ENCODE measurements at regions of chr4 and their contacts with region 1.

Region 1: GRCh38 chr4:7444747-7445146 is 10.0 kb upstream of the PSAPL1 start:
- DNase-seq: no peak
- H3K4me3 ChIP-seq: no peak overlapping the region
- H3K27ac ChIP-seq: no peak overlapping the region
- H3K4me1 ChIP-seq: no peaks in the 10 kb centered on the region
- H3K27me3 ChIP-seq: no peaks in the 10 kb centered on the region
- CTCF ChIP-seq: no peak
- POLR2A ChIP-seq: no peak

Region 2: GRCh38 chr4:7371210-7371941 is 73.4 kb before region 1 on chr4:
- intact Hi-C with region 1: no loop called
- DNase-seq: no peak
- H3K4me3 ChIP-seq: no peak overlapping the region
- H3K27ac ChIP-seq: no peak overlapping the region
- H3K4me1 ChIP-seq: peaks cover 12% of the 10 kb centered on the region
- H3K27me3 ChIP-seq: no peaks in the 10 kb centered on the region
- CTCF ChIP-seq: no peak
- POLR2A ChIP-seq: no peak

Region 3: DNA sequence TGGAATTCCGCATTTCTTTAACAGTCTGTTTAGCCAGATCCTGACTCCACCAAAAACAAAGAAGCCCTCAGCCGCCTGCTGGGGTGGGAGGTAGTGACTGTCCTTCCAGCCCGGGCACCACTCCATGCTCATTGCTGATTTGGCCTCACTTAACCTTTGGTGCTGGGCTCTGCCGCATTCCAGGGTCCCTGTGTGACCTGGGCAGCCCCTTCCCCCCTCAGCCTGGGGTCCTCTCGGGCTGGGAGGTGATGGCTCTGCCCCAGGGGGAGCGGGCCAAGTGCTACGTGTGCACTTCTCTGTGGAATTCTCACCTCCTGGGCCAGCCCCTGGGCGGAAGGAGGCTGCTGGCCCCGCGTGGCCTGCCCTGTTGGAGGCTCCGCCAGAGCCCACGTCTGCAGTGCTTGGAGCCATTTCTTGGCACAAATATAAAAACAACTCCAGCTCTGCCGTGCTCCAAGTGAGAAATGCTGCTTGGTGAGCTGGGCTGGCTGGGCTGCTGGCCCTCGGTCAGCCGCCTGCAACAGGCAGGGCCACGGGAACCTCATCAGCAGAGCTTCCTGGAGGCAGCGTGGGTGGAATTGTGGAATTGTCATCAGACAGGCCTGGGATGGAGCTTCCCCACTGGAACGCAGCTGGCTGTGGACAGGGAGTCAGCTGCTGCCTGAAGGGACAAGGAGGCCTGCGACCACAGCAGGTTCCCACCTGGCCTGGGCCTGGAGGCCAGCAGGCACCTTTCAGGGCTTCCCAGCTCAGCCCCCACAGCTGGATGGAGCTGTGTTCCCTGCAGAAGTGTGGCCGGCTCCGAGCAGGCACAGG is 1061.8 kb after region 1 on chr4:
- intact Hi-C with region 1: no loop called
- DNase-seq: no peak
- H3K4me3 ChIP-seq: no peak overlapping the region
- H3K27ac ChIP-seq: peak overlapping the region; percentile 87
- H3K4me1 ChIP-seq: peaks cover 45% of the 10 kb centered on the region
- H3K27me3 ChIP-seq: no peaks in the 10 kb centered on the region
- CTCF ChIP-seq: no peak
- POLR2A ChIP-seq: no peak

Region 4: DNA sequence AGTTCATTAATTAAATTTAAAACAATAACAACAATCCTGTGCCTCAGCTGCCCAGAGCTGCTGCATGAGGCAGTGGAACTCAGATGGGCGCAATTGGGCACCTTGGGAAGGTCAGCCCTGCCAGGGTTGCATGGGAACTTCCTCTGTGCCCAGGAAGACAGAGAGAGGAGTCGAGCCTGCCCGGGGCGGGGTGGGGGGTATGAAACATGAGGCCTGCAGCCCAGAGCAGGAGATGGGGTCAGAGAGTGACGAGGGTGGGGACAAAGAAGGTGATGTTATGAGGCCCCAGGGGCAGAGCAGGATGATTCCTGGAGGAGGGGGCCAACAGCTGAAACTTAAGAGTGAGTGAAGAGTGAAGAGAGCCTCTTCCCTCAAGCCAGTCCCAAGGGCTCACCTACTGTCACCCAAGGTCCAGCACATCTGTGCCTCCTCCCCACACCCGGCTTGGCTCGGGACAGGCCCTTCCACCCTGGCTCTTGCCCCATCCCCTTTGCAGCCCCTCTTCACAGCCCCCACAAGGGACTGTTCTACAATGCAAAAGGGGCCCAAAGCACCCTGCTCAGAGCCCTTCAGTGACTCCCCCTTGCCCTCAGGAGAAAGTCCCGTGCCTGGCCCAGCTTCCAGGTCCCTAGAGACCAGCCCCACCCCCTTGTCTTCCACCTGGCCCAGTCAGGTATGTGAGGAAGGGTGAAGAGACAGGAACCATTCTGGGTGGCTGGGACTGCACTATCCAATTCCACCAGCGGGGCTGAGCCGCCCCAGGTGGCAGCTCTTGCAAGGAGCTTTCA is 1395.5 kb after region 1 on chr4:
- intact Hi-C with region 1: loop called (anchors 5 kb)
- DNase-seq: no peak
- H3K4me3 ChIP-seq: no peak overlapping the region
- H3K27ac ChIP-seq: no peak overlapping the region
- H3K4me1 ChIP-seq: no peaks in the 10 kb centered on the region
- H3K27me3 ChIP-seq: no peaks in the 10 kb centered on the region
- CTCF ChIP-seq: no peak
- POLR2A ChIP-seq: no peak

Measured in vagina (tissue), 2 donors.